IMR-90 (cell line): ENCODE measurements at regions of chr13 and their contacts with region 1.

Region 1: GRCh38 chr13:106917673-106918556 is 350.0 kb upstream of the ARGLU1 start:
- DNase-seq: peak; percentile 61
- ATAC-seq: peak; percentile 98
- H3K4me3 ChIP-seq: peak overlapping the region; percentile 70
- H3K27ac ChIP-seq: peak overlapping the region; percentile 36; the same call in 1 of the 2 replicates
- H3K4me1 ChIP-seq: no peaks in the 10 kb centered on the region
- H3K27me3 ChIP-seq: no peaks in the 10 kb centered on the region; the same call in none of the 2 replicates
- CTCF ChIP-seq: peak; percentile 94
- POLR2A ChIP-seq: no peak
- RAD21 ChIP-seq: peak; percentile 73

Region 2: DNA sequence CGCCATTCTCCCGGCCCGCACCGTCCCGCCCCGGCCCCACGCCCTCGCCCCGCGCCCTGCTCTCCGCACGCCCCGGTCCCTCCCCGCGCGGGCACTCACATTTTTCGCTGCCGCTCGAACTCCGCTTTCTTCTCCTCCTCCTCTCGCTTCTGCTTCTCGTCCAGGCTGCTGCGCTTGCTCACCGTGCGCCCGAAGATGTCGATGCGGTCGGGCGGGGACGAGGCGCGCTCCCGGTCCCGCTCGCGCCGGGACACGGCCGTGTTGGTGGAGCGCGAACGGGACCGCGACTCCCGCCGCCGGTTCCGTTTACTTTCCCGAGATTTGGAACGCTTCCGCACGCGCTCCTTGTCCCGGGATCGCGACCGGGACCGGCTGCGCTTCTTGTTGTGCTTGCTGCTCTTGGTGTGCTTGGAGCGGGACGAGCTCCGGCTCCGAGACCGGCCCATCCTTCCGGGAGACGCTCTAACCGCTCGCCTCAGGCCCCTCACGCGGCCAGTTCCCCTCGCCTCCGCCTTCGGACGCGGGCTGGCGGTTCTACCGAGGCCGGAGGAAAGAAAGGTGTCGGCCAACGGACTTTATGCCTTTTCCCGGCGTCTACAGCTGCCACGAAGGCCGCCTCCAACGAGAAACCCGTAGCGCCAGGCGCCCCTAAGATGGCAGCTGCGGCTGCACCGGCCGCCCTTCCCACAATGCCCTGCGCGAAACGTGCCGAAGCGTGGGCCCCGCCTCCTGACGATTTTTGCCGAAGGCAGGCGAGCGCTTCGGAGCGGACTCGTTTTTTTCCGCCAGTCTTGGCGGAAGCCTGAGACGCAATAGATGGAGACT is 350.2 kb before region 1 on chr13 and contains the start of gene ARGLU1:
- CTCF ChIA-PET with region 1: no interaction called
- POLR2A ChIA-PET with region 1: no interaction called
- dilution Hi-C with region 1: no loop called
- in situ Hi-C with region 1: no loop called
- intact Hi-C with region 1: loop called (anchors 5 kb)
- DNase-seq: peak; percentile 90
- ATAC-seq: peak; percentile 86
- H3K4me3 ChIP-seq: peak within 1 kb of the TSS; percentile 85
- H3K27ac ChIP-seq: peak within 1 kb of the TSS; percentile 99
- H3K4me1 ChIP-seq: peaks cover 14% of the 10 kb centered on the region
- H3K27me3 ChIP-seq: no peaks in the 10 kb centered on the region
- CTCF ChIP-seq: no peak
- POLR2A ChIP-seq: peak; percentile 93
- RAD21 ChIP-seq: no peak
- total RNA-seq, gene ARGLU1: 11.1 and 28.1 TPM in 2 replicates

Region 3: DNA sequence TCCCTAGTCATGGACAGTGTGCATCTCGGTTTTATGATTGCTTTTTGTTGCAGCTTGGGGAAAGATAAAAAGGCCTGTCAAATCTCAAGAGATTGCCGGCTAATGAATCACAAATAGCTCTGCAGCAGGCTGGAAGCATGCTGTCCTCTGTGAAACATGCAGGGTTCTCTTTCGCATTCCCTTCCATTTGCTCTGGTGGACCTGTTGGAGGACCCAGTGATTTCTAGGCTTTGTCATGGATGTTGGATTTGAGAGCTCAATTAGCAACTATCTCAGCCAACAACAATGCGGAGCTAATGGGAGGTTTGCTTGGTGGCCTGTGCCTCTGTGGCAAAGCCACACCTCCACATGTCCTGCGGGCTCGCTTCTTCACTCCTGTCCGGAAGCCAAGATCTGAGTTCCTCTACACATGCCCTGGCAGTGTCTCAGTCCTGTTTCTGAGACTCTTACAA is 68.1 kb after region 1 on chr13:
- CTCF ChIA-PET with region 1: no interaction called
- POLR2A ChIA-PET with region 1: no interaction called
- dilution Hi-C with region 1: no loop called
- in situ Hi-C with region 1: no loop called
- intact Hi-C with region 1: no loop called
- DNase-seq: peak; percentile 34
- ATAC-seq: peak; percentile 62
- H3K4me3 ChIP-seq: no peak overlapping the region
- H3K27ac ChIP-seq: no peak overlapping the region
- H3K4me1 ChIP-seq: peaks cover 5% of the 10 kb centered on the region; the same call in 1 of the 2 replicates
- H3K27me3 ChIP-seq: no peaks in the 10 kb centered on the region
- CTCF ChIP-seq: no peak
- POLR2A ChIP-seq: no peak
- RAD21 ChIP-seq: no peak